Esophagus muscularis mucosa (tissue), 4 donors: ENCODE measurements at regions of chr4 and their contacts with region 1.

Region 1: DNA sequence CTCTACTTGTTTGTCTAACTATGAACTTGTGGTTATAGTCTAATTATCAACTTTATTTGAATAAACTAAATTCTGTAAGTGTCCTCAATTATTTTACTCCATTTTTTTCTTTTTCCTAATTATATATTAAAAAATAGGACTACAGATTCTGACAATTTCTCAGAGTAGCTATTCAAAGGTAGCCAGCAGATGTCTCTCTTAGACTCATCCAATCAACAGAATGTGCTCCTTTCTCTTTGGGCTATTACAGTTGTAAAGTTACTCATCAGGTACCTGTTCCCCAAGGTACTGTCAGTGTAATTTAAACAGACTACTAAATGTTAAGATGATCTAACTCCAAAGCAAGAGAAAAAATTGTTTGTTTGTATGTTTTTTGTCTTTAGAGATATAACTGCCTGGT is 248.6 kb downstream of the PCDH18 start:
- DNase-seq: no peak
- H3K4me3 ChIP-seq: no peak overlapping the region
- H3K27ac ChIP-seq: no peak overlapping the region
- H3K4me1 ChIP-seq: no peaks in the 10 kb centered on the region
- H3K27me3 ChIP-seq: no peaks in the 10 kb centered on the region
- CTCF ChIP-seq: peak in 2 of 3 experiments; percentile 39 to 43
- EP300 ChIP-seq: no peak
- POLR2A ChIP-seq: no peak

Region 2: DNA sequence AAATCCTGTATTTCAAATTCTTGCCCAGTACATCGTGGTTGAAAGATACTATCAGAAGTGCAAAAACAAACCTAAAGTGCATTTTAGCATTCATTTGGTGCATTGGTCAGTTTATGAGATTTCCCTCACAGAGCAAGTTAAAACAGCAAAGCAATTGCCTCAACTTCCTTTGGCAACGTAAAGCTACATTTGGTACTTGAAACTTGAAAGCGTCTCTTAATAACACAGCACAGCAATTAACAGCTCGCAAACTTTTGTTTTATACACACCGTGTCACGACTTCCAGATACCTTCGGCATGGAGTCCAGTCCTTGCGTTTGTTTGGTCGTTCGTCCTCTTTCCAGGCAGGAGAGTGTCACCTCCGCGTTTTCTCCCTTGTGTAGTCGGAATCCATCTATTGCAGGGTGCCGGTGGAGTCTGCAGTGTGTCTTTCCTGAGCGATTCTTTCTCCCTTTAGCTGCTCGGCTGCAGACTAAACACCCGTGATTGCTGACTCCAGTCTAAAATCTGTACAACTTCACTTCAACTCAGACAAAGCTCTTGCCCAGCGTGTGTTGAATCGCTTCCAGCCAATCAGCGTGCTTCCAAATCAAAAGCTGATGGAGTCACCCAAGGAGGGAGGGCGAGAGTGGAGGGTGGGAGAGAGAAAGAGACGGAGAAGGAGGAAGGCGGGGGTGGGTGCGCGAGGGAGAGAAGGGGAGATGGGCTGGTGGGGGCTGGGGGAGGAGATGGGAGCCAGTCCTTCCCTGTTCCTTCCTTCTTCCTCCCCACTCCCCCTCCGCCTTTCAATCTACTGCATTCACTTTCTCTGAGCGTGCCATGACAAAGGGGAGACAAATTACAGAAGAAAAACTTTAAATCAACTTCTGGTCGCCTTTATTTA is 248.5 kb after region 1 on chr4 and contains the start of gene PCDH18:
- intact Hi-C with region 1: loop called (anchors 5 kb)
- DNase-seq: peak; percentile 98
- H3K4me3 ChIP-seq: peak within 1 kb of the TSS; percentile 61 to 75 (median 70)
- H3K27ac ChIP-seq: peak within 1 kb of the TSS; percentile 84 to 87 (median 86)
- H3K4me1 ChIP-seq: peaks cover 0 to 33% (median 19%) of the 10 kb centered on the region in 4 donors
- H3K27me3 ChIP-seq: no peaks in the 10 kb centered on the region
- CTCF ChIP-seq: no peak
- EP300 ChIP-seq: no peak
- POLR2A ChIP-seq: no peak
- total RNA-seq, gene PCDH18: 38.3 to 62.1 (median 51.0) TPM

Region 3: DNA sequence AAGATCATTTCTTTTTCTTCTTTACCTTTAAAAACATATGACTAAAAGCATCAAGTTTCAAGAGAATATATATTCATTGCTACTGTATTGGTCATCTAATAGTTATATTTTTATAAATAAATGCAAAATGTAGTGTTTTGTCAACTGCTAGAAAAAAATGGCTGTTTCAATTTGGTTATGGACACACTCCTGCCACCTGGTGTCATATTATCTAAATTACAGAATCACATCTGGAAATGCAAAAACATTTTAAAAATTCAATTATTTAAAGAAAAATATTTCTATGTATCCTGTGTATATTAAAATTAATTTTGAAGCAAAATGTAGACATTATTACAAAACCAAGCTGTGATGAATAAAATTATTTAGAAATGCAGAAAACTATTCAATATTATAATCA is 577.9 kb after region 1 on chr4:
- intact Hi-C with region 1: loop called (anchors 5 kb)
- DNase-seq: no peak
- H3K4me3 ChIP-seq: no peak overlapping the region
- H3K27ac ChIP-seq: no peak overlapping the region
- H3K4me1 ChIP-seq: no peaks in the 10 kb centered on the region
- H3K27me3 ChIP-seq: no peaks in the 10 kb centered on the region
- CTCF ChIP-seq: peak; percentile 56 to 61 (median 58)
- EP300 ChIP-seq: no peak
- POLR2A ChIP-seq: no peak